MCF 10A (cell line): ENCODE measurements at regions of chr5 and their contacts with region 1.

Region 1: DNA sequence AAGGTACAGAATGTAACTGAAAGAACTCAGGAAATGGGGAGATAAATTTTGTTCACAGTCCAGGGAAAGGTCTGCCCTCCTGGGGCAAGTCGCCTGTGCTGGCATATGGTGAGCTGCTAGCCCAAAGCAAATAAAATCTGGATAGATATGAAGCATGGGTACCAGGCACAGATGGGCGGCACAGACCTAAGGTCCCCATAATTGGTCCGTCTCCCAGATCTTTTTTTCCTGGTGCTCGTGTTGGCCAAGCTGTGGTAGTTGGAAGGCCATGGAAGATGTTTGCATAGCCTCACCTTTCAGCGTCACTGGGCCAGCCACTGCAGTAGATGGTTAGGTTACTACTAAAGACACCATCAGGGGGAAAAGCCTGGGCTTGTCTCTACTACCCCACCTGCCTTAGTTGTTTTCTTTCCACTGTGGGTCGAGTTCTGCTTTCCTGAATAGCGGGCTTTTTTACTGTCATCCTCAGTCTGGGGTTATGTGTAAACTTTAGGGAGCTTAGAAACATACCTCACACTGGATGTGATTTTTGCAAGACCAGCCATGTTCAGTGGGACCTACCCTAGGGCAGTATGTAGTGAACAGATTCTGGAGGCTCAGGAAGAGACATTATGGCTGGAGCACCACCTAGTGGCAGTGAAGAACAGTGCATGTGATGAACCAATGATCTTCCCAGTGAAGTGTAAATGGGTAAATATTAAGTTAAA is 24.2 kb upstream of the GLRX start:
- DNase-seq: peak; percentile 84
- H3K4me3 Mint-ChIP-seq: no peak overlapping the region
- H3K27ac Mint-ChIP-seq: no peak overlapping the region
- H3K4me1 Mint-ChIP-seq: peaks cover 32% of the 10 kb centered on the region
- H3K27me3 Mint-ChIP-seq: no peaks in the 10 kb centered on the region
- CTCF ChIP-seq: peak; percentile 91

Region 2: GRCh38 chr5:95283761-95284415 is 562.8 kb before region 1 on chr5:
- CTCF ChIA-PET with region 1: no interaction called
- POLR2A ChIA-PET with region 1: no interaction called
- intact Hi-C with region 1: loop called (anchors 5 kb)
- DNase-seq: peak; percentile 47
- H3K4me3 Mint-ChIP-seq: peak overlapping the region; percentile 69
- H3K27ac Mint-ChIP-seq: no peak overlapping the region
- H3K4me1 Mint-ChIP-seq: no peaks in the 10 kb centered on the region
- H3K27me3 Mint-ChIP-seq: peaks cover 64% of the 10 kb centered on the region
- CTCF ChIP-seq: peak; percentile 60

Region 3: DNA sequence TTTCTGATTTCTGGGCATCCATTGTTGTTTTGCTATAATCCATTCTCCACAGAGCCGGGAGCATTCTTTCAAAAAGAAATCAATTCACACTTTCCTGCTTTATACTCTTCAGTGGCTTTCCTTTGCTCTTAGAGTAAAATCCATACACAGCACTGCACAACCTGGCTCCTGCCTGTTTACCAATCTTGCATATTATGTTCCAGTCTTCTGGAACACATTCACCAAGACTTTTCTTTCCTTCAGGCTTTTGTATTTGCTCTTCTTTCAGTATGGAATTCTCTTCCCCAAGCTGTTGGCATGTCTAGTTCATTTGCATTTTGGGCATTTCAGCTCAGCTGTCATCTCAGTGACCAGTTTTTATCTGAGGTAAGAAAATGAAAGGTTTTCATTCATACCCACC is 193.9 kb before region 1 on chr5:
- CTCF ChIA-PET with region 1: interaction called, 149 read pairs
- POLR2A ChIA-PET with region 1: no interaction called
- intact Hi-C with region 1: no loop called
- DNase-seq: no peak
- H3K4me3 Mint-ChIP-seq: no peak overlapping the region
- H3K27ac Mint-ChIP-seq: no peak overlapping the region
- H3K4me1 Mint-ChIP-seq: peaks cover 6% of the 10 kb centered on the region
- H3K27me3 Mint-ChIP-seq: no peaks in the 10 kb centered on the region
- CTCF ChIP-seq: no peak

Region 4: GRCh38 chr5:95730730-95731570 is 115.8 kb before region 1 on chr5 and contains the start of gene RHOBTB3:
- CTCF ChIA-PET with region 1: interaction called, 15 read pairs
- POLR2A ChIA-PET with region 1: interaction called, 3 read pairs
- intact Hi-C with region 1: no loop called
- DNase-seq: peak; percentile 61
- H3K4me3 Mint-ChIP-seq: peak within 1 kb of the TSS; percentile 73
- H3K27ac Mint-ChIP-seq: no peak within 1 kb of the TSS
- H3K4me1 Mint-ChIP-seq: no peaks in the 10 kb centered on the region
- H3K27me3 Mint-ChIP-seq: no peaks in the 10 kb centered on the region
- CTCF ChIP-seq: no peak
- total RNA-seq, gene RHOBTB3: 3.4 and 3.8 TPM in 2 replicates

Region 5: DNA sequence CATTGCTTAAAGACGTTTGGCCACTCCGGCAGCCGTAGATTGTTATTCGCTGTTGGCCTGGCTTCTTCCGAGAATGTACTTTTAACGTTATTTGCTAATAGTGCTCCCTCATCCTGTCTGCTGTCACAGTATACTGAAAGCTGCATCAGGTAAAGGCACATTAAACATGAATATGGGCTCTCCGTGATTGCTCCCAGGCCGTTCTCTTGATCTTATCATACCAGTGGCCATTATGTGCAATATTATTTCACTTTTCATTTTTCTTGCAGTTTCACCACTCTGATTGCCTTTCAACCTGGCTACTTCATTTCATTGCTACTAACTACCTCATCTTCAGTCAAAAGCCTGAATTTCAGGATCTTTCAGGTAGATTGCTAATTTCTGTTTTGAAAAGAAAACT is 58.2 kb before region 1 on chr5:
- CTCF ChIA-PET with region 1: interaction called, 336 read pairs
- POLR2A ChIA-PET with region 1: interaction called, 3 read pairs
- intact Hi-C with region 1: no loop called
- DNase-seq: no peak
- H3K4me3 Mint-ChIP-seq: no peak overlapping the region
- H3K27ac Mint-ChIP-seq: no peak overlapping the region
- H3K4me1 Mint-ChIP-seq: no peaks in the 10 kb centered on the region
- H3K27me3 Mint-ChIP-seq: no peaks in the 10 kb centered on the region
- CTCF ChIP-seq: no peak

Region 6: DNA sequence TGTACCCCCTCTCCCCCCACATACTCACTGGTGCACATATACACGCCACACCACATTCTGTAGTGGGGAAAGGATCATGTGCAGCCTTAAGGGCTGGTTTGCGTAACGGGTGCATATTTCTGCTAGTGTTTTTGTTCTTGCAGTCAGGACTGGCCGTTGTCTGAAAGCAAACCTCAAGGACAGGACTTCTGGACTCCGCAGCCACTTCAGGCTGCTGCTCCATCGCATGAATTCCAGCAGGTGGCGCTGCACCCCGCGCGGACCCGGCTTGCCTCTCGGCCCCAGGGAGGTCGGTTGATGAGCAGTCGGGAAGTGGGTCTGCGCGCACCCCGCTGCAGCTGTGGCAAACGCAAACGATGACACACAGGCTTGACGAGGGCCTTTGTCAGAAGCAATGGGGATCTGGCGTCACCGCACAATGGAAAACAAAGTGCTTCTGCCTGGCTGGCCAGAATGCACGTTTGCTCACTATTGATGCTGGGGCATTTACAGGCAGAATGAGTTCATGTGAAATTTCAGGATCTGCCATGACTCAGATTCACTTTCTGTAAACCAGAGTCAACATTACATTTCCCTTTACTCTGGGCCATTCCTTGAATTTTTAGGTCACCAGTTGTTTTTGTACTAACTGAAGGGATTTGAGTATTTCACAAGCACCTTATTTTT is 12.1 kb after region 1 on chr5:
- CTCF ChIA-PET with region 1: interaction called, 12 read pairs
- POLR2A ChIA-PET with region 1: interaction called, 7 read pairs
- intact Hi-C with region 1: no loop called
- DNase-seq: peak; percentile 96
- H3K4me3 Mint-ChIP-seq: peak overlapping the region; percentile 67
- H3K27ac Mint-ChIP-seq: peak overlapping the region; percentile 99
- H3K4me1 Mint-ChIP-seq: peaks cover 57% of the 10 kb centered on the region
- H3K27me3 Mint-ChIP-seq: no peaks in the 10 kb centered on the region
- CTCF ChIP-seq: peak; percentile 93